ENCODE measurements at regions of chrX and their contacts with region 1.

Region 1: DNA sequence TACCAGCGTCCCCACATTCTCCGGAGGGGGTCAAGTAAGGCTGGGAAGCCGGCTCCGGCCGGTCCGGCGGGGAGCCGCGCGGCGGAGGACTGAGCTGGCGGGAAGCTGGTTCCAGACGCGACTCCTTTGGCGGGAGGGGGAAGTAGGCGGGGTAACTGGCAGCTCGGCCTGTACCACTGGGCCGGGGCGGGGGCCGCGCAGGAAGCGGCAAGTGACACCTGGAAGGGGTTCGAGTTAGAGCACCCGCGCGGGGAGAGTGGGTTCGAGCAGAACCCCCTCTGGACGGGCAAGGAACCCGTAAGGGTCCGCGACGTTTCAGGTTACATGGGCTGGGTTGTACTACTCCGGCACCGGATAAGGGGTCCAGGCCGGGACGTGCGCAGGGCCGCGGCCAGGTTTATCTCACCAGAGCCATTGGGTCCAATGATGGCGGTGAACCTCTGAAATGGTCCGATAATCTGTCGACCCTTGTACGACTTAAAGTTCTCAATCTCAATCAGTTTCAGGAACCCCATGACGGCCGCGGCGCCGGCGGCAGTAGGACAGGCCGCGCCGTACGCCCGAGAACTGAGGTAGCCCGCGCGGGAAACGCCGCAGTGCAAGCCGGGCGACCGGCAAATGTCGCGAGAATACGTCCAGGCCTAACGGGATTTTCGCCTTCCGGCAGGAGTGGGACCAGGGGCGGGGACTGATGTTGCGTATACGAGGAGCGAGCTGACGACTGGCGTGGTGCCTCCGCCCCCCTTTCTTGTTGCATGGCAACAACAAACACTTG is at the start of gene SMC1A:
- DNase-seq: peak; percentile 82 to 99
- H3K4me3 ChIP-seq: peak within 1 kb of the TSS; percentile 58
- H3K27ac ChIP-seq: peak within 1 kb of the TSS; percentile 49; the same call in 1 of the 2 replicates
- H3K4me1 ChIP-seq: no peaks in the 10 kb centered on the region
- H3K27me3 ChIP-seq: no peaks in the 10 kb centered on the region
- CTCF ChIP-seq: no peak
- total RNA-seq, gene SMC1A: 114 and 162 TPM in 2 replicates

Region 2: DNA sequence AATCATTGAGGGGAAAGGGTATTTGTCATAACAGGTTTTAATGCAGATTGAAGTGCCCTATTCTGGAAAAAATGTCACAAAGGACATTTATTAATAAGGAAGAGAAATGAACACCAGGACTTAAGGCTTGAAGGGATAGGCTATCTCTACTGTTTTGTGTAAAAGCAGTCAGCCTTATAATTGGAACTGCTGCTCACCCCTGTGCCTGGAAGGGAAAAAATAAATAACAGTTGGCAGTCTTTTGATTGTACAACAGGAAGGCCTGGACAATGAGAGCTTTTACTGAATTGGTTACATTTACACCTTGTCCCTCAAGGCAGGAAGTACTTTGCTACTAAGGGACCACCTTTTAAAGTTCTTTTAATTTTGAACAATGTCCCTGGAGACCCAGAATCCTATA is 1255.4 kb before region 1 on chrX:
- CTCF ChIA-PET with region 1: no interaction called
- POLR2A ChIA-PET with region 1: no interaction called
- intact Hi-C with region 1: no loop called
- DNase-seq: no peak
- H3K4me3 ChIP-seq: no peak overlapping the region
- H3K27ac ChIP-seq: no peak overlapping the region
- H3K4me1 ChIP-seq: no peaks in the 10 kb centered on the region
- H3K27me3 ChIP-seq: no peaks in the 10 kb centered on the region
- CTCF ChIP-seq: no peak

Region 3: DNA sequence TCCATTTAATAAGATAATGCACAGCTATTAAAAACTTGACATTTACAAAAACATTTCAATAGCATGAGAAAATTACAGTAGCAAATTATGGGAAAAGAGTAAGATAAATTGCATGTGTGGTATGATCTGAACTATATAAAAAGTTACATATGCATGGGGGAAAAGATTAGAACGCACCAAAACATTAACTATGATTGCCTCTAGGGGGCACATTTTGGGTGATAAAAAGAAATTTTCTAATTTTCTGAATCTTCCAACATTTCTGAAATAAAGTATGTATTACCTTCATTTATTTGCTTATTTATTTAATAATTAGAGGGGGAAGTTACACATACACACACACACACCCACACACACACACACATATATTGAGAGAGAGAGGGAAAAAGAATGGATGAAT is 177.7 kb before region 1 on chrX:
- CTCF ChIA-PET with region 1: interaction called, 10 read pairs
- POLR2A ChIA-PET with region 1: no interaction called
- intact Hi-C with region 1: no loop called
- DNase-seq: no peak
- H3K4me3 ChIP-seq: no peak overlapping the region
- H3K27ac ChIP-seq: no peak overlapping the region
- H3K4me1 ChIP-seq: no peaks in the 10 kb centered on the region
- H3K27me3 ChIP-seq: no peaks in the 10 kb centered on the region
- CTCF ChIP-seq: peak; percentile 38; the same call in 1 of the 2 replicates

Region 4: GRCh38 chrX:53284684-53285447 is 137.4 kb before region 1 on chrX:
- CTCF ChIA-PET with region 1: no interaction called
- POLR2A ChIA-PET with region 1: interaction called, 4 read pairs
- intact Hi-C with region 1: loop called (anchors 5 kb)
- DNase-seq: peak in 1 of 2 experiments; percentile 62
- H3K4me3 ChIP-seq: no peak overlapping the region
- H3K27ac ChIP-seq: no peak overlapping the region
- H3K4me1 ChIP-seq: peaks cover 10% of the 10 kb centered on the region; the same call in 1 of the 2 replicates
- H3K27me3 ChIP-seq: no peaks in the 10 kb centered on the region
- CTCF ChIP-seq: peak; percentile 69

Region 5: GRCh38 chrX:53433651-53434639 is 11.7 kb after region 1 on chrX and contains the start of gene HSD17B10:
- CTCF ChIA-PET with region 1: interaction called, 3 read pairs
- POLR2A ChIA-PET with region 1: no interaction called
- intact Hi-C with region 1: loop called (anchors 1 kb)
- DNase-seq: peak; percentile 65 to 93
- H3K4me3 ChIP-seq: peak within 1 kb of the TSS; percentile 59
- H3K27ac ChIP-seq: no peak within 1 kb of the TSS
- H3K4me1 ChIP-seq: no peaks in the 10 kb centered on the region
- H3K27me3 ChIP-seq: no peaks in the 10 kb centered on the region
- CTCF ChIP-seq: no peak
- total RNA-seq, gene HSD17B10: 204 and 234 TPM in 2 replicates

Region 6: GRCh38 chrX:53642337-53642736 is 220.1 kb after region 1 on chrX:
- CTCF ChIA-PET with region 1: no interaction called
- POLR2A ChIA-PET with region 1: no interaction called
- intact Hi-C with region 1: no loop called
- DNase-seq: no peak
- H3K4me3 ChIP-seq: no peak overlapping the region
- H3K27ac ChIP-seq: no peak overlapping the region
- H3K4me1 ChIP-seq: no peaks in the 10 kb centered on the region
- H3K27me3 ChIP-seq: no peaks in the 10 kb centered on the region
- CTCF ChIP-seq: no peak